HEK293 (cell line): ENCODE measurements at regions of chr4 and their contacts with region 1.

Region 1: GRCh38 chr4:181528570-181529184 is 714.5 kb upstream of the TENM3 start:
- H3K4me3 ChIP-seq: no peak overlapping the region
- H3K27ac ChIP-seq: no peak overlapping the region
- H3K4me1 ChIP-seq: no peaks in the 10 kb centered on the region
- CTCF ChIP-seq: peak; percentile 58; the same call in 1 of the 2 replicates

Region 2: GRCh38 chr4:181143250-181143854 is 385.3 kb before region 1 on chr4:
- CTCF ChIA-PET with region 1: interaction called, 41 read pairs
- POLR2A ChIA-PET with region 1: no interaction called
- H3K4me3 ChIP-seq: no peak overlapping the region
- H3K27ac ChIP-seq: no peak overlapping the region
- H3K4me1 ChIP-seq: no peaks in the 10 kb centered on the region
- CTCF ChIP-seq: peak; percentile 42

Region 3: GRCh38 chr4:181261279-181261678 is 267.4 kb before region 1 on chr4:
- CTCF ChIA-PET with region 1: interaction called, 14 read pairs
- POLR2A ChIA-PET with region 1: no interaction called
- H3K4me3 ChIP-seq: no peak overlapping the region
- H3K27ac ChIP-seq: no peak overlapping the region
- H3K4me1 ChIP-seq: peaks cover 11% of the 10 kb centered on the region; the same call in 1 of the 2 replicates
- CTCF ChIP-seq: no peak

Region 4: GRCh38 chr4:181301735-181302710 is 226.7 kb before region 1 on chr4:
- CTCF ChIA-PET with region 1: interaction called, 16 read pairs
- POLR2A ChIA-PET with region 1: no interaction called
- H3K4me3 ChIP-seq: no peak overlapping the region
- H3K27ac ChIP-seq: no peak overlapping the region
- H3K4me1 ChIP-seq: no peaks in the 10 kb centered on the region
- CTCF ChIP-seq: no peak